ENCODE measurements at regions of chr1 and their contacts with region 1.

Region 1: DNA sequence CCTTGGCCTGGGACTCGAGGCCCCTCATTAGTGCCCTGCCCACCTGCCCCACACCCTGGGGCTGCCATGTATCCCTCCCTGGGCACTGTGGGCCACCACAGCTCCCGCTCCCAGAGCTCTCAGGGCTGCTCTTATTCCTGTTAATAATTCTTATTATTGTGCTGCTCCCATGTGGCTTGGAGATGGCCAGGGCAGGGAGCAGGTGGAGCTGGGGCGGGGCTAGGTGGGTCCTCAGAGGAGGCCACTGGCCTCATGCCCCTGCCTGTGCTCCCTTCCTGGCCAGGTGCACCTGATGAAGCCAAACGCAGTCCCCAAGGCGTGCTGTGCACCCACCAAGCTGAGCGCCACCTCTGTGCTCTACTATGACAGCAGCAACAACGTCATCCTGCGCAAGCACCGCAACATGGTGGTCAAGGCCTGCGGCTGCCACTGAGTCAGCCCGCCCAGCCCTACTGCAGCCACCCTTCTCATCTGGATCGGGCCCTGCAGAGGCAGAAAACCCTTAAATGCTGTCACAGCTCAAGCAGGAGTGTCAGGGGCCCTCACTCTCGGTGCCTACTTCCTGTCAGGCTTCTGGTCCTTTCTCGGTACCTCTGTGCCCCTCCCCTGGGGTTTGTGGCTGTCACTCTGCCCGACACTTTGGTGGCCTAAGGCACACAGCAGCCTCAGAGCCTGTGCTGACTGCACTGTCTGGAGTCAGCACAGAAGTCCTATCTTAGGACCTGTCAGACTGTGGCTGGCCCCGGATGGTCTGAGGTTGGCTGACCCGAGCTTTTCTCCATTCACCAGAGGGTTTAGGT is 34.1 kb downstream of the BMP8A start:
- DNase-seq: peak; percentile 28 to 32
- ATAC-seq: peak in 7 of 8 donors; percentile 27 to 79 (median 66)
- H3K4me3 ChIP-seq: no peak overlapping the region
- H3K27ac ChIP-seq: peak overlapping the region in 5 of 10 donors; percentile 9 to 70 (median 37)
- H3K4me1 ChIP-seq: no peaks in the 10 kb centered on the region
- H3K27me3 ChIP-seq: no peaks in the 10 kb centered on the region
- CTCF ChIP-seq: no peak

Region 2: GRCh38 chr1:39478126-39478915 is 47.2 kb before region 1 on chr1:
- intact Hi-C with region 1: loop called in 2 of 10 experiments (anchors 5 to 10 kb)
- DNase-seq: no peak
- ATAC-seq: no peak
- H3K4me3 ChIP-seq: no peak overlapping the region
- H3K27ac ChIP-seq: no peak overlapping the region
- H3K4me1 ChIP-seq: peaks cover 0 to 20% (median 3%) of the 10 kb centered on the region in 9 donors
- H3K27me3 ChIP-seq: no peaks in the 10 kb centered on the region
- CTCF ChIP-seq: no peak

Region 3: DNA sequence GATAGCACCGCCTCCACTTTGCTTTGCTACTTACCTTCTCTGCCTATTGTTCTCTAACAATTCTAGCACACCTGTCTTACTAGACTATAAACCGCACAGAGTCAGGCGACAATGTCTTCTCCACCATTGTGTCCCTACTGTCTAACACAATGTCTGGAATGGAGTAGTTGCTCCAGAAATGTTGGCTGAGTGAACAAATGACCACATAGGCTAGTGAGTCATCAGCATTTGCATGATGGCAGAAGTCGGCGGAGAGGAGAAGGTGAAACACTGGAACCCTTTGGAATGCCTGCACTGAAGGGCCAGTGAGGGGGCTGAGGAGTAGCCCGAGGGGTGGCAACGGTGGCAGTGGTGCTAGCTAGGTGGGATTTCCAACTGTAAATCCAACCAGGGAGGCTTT is 65.0 kb after region 1 on chr1:
- intact Hi-C with region 1: no loop called
- DNase-seq: no peak
- ATAC-seq: no peak
- H3K4me3 ChIP-seq: no peak overlapping the region
- H3K27ac ChIP-seq: no peak overlapping the region
- H3K4me1 ChIP-seq: no peaks in the 10 kb centered on the region
- H3K27me3 ChIP-seq: peaks cover 0 to 3% (median 0%) of the 10 kb centered on the region in 7 donors
- CTCF ChIP-seq: no peak

Region 4: DNA sequence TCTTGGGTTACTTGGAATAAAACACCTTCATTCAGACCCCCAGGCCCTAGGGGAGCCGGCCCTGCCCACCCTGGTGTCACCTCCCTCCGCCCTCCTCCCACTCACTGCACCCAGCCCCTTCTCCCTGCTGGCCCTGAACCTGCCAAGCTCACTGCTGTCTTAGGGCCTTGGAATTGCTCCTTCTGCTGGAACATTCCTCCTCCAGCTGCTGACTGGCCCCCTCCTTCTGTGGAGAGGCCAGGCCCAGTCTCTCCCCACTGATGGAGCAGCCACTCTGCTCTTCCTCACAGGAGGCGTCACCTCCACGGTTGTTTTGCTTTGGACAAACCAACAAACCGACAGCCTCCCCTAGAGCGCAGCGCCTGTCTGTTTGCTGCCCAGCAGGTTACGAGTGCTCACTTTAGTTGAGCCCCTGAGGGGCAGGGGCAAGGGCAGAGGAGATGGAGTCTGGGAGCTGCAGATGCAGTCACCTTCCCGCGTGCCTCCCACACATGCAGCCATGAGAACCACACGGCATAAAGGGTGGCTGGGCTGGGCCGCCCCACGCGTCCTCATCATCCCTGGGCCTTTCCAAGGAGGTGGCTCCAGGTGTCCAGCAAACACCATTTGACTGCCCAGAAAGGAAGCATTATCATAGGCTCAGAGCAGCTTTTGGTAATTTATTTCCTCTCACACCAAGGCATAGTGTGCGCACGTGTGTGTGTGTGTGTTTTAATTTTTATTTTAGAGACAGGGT is 236.1 kb after region 1 on chr1:
- intact Hi-C with region 1: loop called in 1 of 10 experiments (anchors 5 kb)
- DNase-seq: no peak
- ATAC-seq: no peak
- H3K4me3 ChIP-seq: no peak overlapping the region
- H3K27ac ChIP-seq: no peak overlapping the region
- H3K4me1 ChIP-seq: no peaks in the 10 kb centered on the region
- H3K27me3 ChIP-seq: no peaks in the 10 kb centered on the region
- CTCF ChIP-seq: no peak

Measured in heart right ventricle (tissue), 16 donors.